ENCODE measurements at regions of chr16 and their contacts with region 1.

Region 1: DNA sequence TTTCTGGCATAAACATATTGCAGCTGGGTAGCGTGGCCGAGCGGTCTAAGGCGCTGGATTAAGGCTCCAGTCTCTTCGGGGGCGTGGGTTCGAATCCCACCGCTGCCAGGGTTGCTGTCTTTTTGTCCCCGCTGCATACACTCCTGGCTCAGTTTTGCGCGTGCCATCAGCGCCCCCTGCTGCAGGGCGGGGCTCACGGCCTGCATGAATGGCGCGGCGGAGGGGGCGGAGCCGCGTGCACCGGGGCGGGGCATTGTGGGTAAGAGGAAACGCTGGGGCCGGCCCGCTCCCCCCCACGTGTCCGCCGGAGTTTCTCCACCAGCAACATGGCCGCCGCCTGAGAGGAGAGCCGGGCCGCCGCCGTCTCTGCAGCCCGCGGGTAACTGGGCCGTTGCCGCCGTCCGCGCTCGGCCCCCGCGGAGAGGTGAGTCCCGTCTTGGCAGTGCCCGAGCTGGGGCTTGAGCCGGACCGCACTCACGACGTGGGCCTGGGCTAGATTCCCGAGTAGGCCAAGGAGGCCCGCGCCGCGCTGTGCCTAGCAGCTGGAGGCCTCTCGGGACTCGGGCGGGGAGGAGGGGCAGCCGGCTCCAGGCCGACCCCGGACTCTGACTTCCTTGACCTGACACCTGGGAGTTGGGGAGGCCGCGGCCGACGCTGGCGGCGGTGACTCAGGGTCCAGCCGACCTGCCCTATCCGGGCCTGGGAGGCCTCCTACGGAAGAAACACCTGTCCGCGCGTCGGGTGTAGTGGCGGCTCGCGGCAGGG is at the start of gene POLR3E:
- DNase-seq: peak; percentile 100
- H3K4me3 Mint-ChIP-seq: peak within 1 kb of the TSS; percentile 94
- H3K27ac Mint-ChIP-seq: peak within 1 kb of the TSS; percentile 90
- H3K4me1 Mint-ChIP-seq: peaks cover 45% of the 10 kb centered on the region
- H3K27me3 Mint-ChIP-seq: peaks cover 3% of the 10 kb centered on the region
- total RNA-seq, gene POLR3E: 107 and 111 TPM in 2 replicates

Region 2: DNA sequence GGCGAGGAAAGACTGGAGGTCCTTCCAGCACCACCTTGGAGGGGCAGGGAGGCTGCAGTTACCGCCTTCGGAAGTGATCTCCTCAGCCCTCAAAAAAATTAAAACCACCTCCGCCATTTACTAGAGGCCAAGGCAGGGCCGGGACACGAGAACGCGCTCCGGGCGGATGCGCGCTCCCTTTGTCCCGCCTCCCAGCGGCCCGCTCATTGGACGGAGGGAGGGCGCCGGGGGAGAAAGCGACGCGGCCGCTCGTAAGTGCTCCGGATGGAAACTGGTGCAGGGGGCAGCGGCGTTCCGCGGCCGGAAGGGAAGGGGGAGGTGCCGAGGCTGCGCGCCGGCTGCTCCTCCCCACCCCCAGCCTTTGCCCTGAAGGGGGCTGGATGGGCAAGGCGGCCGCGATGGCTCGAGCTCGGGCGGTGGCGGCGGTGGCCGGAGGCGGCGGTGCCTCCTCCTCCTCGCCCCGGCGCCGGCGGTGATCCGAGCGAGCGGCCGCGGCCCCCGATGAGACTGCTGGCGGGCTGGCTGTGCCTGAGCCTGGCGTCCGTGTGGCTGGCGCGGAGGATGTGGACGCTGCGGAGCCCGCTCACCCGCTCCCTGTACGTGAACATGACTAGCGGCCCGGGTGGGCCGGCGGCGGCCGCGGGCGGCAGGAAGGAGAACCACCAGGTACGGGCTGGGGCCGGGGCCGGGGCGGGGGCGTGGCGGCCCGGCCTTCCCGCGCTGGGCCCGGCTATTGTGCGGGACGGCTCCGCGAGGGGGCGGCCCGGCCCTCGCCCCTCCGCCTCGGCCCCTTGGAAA is 697.9 kb before region 1 on chr16 and contains the start of gene METTL9:
- intact Hi-C with region 1: loop called (anchors 2 kb)
- DNase-seq: peak; percentile 95
- H3K4me3 Mint-ChIP-seq: peak within 1 kb of the TSS; percentile 96
- H3K27ac Mint-ChIP-seq: peak within 1 kb of the TSS; percentile 87
- H3K4me1 Mint-ChIP-seq: peaks cover 55% of the 10 kb centered on the region
- H3K27me3 Mint-ChIP-seq: peaks cover 3% of the 10 kb centered on the region
- total RNA-seq, gene METTL9: 58.8 and 64.9 TPM in 2 replicates

Region 3: GRCh38 chr16:22001591-22001990 is 295.7 kb before region 1 on chr16:
- intact Hi-C with region 1: loop called (anchors 1 kb)
- DNase-seq: no peak
- H3K4me3 Mint-ChIP-seq: no peak overlapping the region
- H3K27ac Mint-ChIP-seq: no peak overlapping the region
- H3K4me1 Mint-ChIP-seq: peaks cover 19% of the 10 kb centered on the region
- H3K27me3 Mint-ChIP-seq: peaks cover 9% of the 10 kb centered on the region

Region 4: GRCh38 chr16:22206013-22206841 is 91.1 kb before region 1 on chr16 and contains the start of gene EEF2K:
- intact Hi-C with region 1: loop called (anchors 1 kb)
- DNase-seq: peak; percentile 77
- H3K4me3 Mint-ChIP-seq: peak within 1 kb of the TSS; percentile 91
- H3K27ac Mint-ChIP-seq: peak within 1 kb of the TSS; percentile 91
- H3K4me1 Mint-ChIP-seq: peaks cover 27% of the 10 kb centered on the region
- H3K27me3 Mint-ChIP-seq: no peaks in the 10 kb centered on the region
- total RNA-seq, gene EEF2K: 28.3 and 30.5 TPM in 2 replicates

Region 5: GRCh38 chr16:22240023-22240710 is 57.1 kb before region 1 on chr16:
- intact Hi-C with region 1: loop called (anchors 1 kb)
- DNase-seq: no peak
- H3K4me3 Mint-ChIP-seq: no peak overlapping the region
- H3K27ac Mint-ChIP-seq: no peak overlapping the region
- H3K4me1 Mint-ChIP-seq: peaks cover 24% of the 10 kb centered on the region
- H3K27me3 Mint-ChIP-seq: no peaks in the 10 kb centered on the region

Region 6: DNA sequence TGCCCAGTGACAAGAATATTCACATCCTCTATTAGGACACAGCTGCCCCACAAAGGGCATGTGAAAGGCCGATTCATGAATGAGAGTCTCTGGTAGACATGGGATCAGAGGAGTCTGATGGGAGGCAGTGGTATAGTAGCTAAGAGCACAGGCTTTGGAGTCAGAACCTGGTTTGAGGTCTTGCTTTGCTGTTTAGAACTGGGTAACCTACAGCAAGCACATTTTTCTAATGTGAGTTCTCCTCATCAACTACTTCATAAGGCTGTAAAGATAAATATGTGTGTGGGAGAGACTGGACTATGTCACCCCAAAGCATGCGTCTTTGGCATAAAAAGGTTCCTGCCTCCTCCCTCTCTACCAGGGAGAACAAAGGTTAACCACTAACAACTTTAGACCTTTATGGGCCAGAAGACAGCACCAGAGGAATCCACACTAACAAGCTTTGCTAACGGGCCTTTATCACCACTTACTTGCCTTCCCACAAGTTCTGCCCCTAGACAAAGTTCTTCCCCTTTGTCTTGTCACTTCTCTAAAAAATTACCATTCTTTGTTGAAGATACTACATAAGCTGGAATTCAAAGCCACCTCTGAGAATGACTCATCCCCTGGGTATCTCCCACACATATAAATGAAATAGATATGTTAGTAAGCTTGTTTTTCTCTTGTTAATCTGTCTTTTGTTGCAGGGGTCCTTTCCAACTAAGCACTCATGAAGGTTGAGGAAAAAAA is 56.1 kb after region 1 on chr16:
- intact Hi-C with region 1: loop called (anchors 2 kb)
- DNase-seq: peak; percentile 6
- H3K4me3 Mint-ChIP-seq: peak overlapping the region; percentile 48
- H3K27ac Mint-ChIP-seq: peak overlapping the region; percentile 94
- H3K4me1 Mint-ChIP-seq: peaks cover 58% of the 10 kb centered on the region
- H3K27me3 Mint-ChIP-seq: no peaks in the 10 kb centered on the region

Region 7: GRCh38 chr16:22366889-22367288 is 69.6 kb after region 1 on chr16:
- intact Hi-C with region 1: no loop called
- DNase-seq: no peak
- H3K4me3 Mint-ChIP-seq: peak overlapping the region; percentile 30
- H3K27ac Mint-ChIP-seq: peak overlapping the region; percentile 29
- H3K4me1 Mint-ChIP-seq: peaks cover 86% of the 10 kb centered on the region
- H3K27me3 Mint-ChIP-seq: no peaks in the 10 kb centered on the region